Activated CD8-positive, alpha-beta memory T cell treated with anti-CD3 and anti-CD28 coated beads, Interleukin-2, amount 10 ng/mL, durations not matched to agents 7 days and 5 days (primary cell): ENCODE measurements at regions of chr14 and their contacts with region 1.

Region 1: GRCh38 chr14:94036313-94037050 is 10.3 kb downstream of the OTUB2 start:
- DNase-seq: peak; percentile 86
- ATAC-seq: peak; percentile 97
- H3K4me3 Mint-ChIP-seq: no peak overlapping the region
- H3K27ac Mint-ChIP-seq: no peak overlapping the region
- H3K4me1 Mint-ChIP-seq: peaks cover 5% of the 10 kb centered on the region
- H3K27me3 Mint-ChIP-seq: no peaks in the 10 kb centered on the region

Region 2: GRCh38 chr14:93880021-93880820 is 156.3 kb before region 1 on chr14:
- CTCF ChIA-PET with region 1: no interaction called
- DNase-seq: no peak
- ATAC-seq: no peak
- H3K4me3 Mint-ChIP-seq: no peak overlapping the region
- H3K27ac Mint-ChIP-seq: no peak overlapping the region
- H3K4me1 Mint-ChIP-seq: peaks cover 7% of the 10 kb centered on the region
- H3K27me3 Mint-ChIP-seq: peaks cover 8% of the 10 kb centered on the region

Region 3: GRCh38 chr14:93953263-93953662 is 83.2 kb before region 1 on chr14:
- CTCF ChIA-PET with region 1: interaction called, 12 read pairs
- DNase-seq: no peak
- ATAC-seq: no peak
- H3K4me3 Mint-ChIP-seq: peak overlapping the region; percentile 99
- H3K27ac Mint-ChIP-seq: peak overlapping the region; percentile 99
- H3K4me1 Mint-ChIP-seq: peaks cover 89% of the 10 kb centered on the region
- H3K27me3 Mint-ChIP-seq: no peaks in the 10 kb centered on the region

Region 4: DNA sequence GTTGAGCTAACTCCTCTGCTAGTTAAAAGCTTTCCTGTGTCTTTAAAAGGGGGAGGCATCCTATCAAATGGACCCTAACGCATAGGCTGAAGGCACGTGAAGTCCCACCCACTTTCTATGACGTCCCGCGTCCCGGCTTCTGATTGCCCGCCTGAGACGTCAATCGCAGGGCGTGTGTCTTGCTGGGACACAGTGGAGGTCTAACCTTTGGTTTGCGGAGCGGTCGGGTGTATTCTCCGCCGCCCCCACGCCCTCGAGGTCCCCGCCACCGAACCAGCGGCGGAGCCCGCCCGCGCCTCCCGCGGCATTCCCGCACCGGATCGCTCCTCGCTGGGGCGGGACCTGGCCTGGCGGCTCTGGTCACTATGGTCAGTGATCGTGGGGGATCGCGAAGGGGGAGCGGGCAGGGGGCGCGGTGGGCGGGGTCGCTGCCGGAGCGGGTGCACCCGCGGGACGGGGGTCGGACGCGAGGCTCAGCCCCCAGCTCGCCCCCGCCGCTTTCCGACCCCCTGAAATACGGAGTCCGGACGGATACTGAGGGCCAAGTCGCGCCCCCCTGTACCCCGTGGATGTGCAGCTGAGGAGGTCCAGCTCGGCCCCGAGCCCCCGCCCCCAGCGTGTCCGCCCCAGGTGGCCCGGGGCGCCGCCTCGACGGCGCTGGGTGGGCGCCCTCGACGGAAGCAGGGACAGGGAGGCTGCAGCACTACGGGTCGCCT is 10.2 kb before region 1 on chr14 and contains the start of gene OTUB2:
- CTCF ChIA-PET with region 1: interaction called, 45 read pairs
- DNase-seq: peak; percentile 99
- ATAC-seq: peak; percentile 98
- H3K4me3 Mint-ChIP-seq: peak within 1 kb of the TSS; percentile 64
- H3K27ac Mint-ChIP-seq: peak within 1 kb of the TSS; percentile 65
- H3K4me1 Mint-ChIP-seq: peaks cover 56% of the 10 kb centered on the region
- H3K27me3 Mint-ChIP-seq: no peaks in the 10 kb centered on the region
- total RNA-seq, gene OTUB2: 3.4 to 4.2 TPM

Region 5: GRCh38 chr14:94080471-94081289 is 44.2 kb after region 1 on chr14 and contains the start of gene DDX24:
- CTCF ChIA-PET with region 1: interaction called, 24 read pairs
- DNase-seq: peak; percentile 98
- ATAC-seq: peak; percentile 97
- H3K4me3 Mint-ChIP-seq: peak within 1 kb of the TSS; percentile 95
- H3K27ac Mint-ChIP-seq: peak within 1 kb of the TSS; percentile 98
- H3K4me1 Mint-ChIP-seq: peaks cover 58% of the 10 kb centered on the region
- H3K27me3 Mint-ChIP-seq: no peaks in the 10 kb centered on the region
- total RNA-seq, gene DDX24: 211 to 244 TPM

Region 6: GRCh38 chr14:94136575-94137331 is 100.3 kb after region 1 on chr14:
- CTCF ChIA-PET with region 1: interaction called, 150 read pairs
- DNase-seq: peak; percentile 91
- ATAC-seq: peak; percentile 87
- H3K4me3 Mint-ChIP-seq: no peak overlapping the region
- H3K27ac Mint-ChIP-seq: no peak overlapping the region
- H3K4me1 Mint-ChIP-seq: peaks cover 5% of the 10 kb centered on the region
- H3K27me3 Mint-ChIP-seq: peaks cover 29% of the 10 kb centered on the region

Region 7: GRCh38 chr14:94180655-94181271 is 144.3 kb after region 1 on chr14:
- CTCF ChIA-PET with region 1: interaction called, 26 read pairs
- DNase-seq: no peak
- ATAC-seq: peak; percentile 91
- H3K4me3 Mint-ChIP-seq: peak overlapping the region; percentile 61
- H3K27ac Mint-ChIP-seq: peak overlapping the region; percentile 70
- H3K4me1 Mint-ChIP-seq: peaks cover 11% of the 10 kb centered on the region
- H3K27me3 Mint-ChIP-seq: peaks cover 31% of the 10 kb centered on the region